ENCODE measurements at regions of chr3 and their contacts with region 1.

Region 1: GRCh38 chr3:23805633-23806533 is at the start of gene UBE2E1:
- DNase-seq: no peak
- ATAC-seq: peak; percentile 71
- H3K4me3 ChIP-seq: peak within 1 kb of the TSS; percentile 98
- H3K27ac ChIP-seq: peak within 1 kb of the TSS; percentile 82
- H3K4me1 ChIP-seq: peaks cover 8% of the 10 kb centered on the region
- H3K27me3 ChIP-seq: no peaks in the 10 kb centered on the region
- CTCF ChIP-seq: no peak
- EP300 ChIP-seq: 0 out of 4 replicates have a peak, but pooled peaks of 1 of the 2 experiments have one; percentile 57
- POLR2A ChIP-seq: peak; percentile 84
- RAD21 ChIP-seq: no peak
- polyA plus RNA-seq, gene UBE2E1: 113 to 128 TPM

Region 2: GRCh38 chr3:23202921-23203707 is 602.8 kb before region 1 on chr3 and contains the start of gene UBE2E2:
- CTCF ChIA-PET with region 1: no interaction called
- POLR2A ChIA-PET with region 1: no interaction called
- RAD21 ChIA-PET with region 1: interaction called, 3 read pairs
- SMC1A ChIA-PET with region 1: interaction called, 4 read pairs
- in situ Hi-C with region 1: no loop called
- intact Hi-C with region 1: loop called (anchors 5 kb)
- DNase-seq: no peak
- ATAC-seq: peak; percentile 77
- H3K4me3 ChIP-seq: peak within 1 kb of the TSS; percentile 92
- H3K27ac ChIP-seq: peak within 1 kb of the TSS; percentile 59
- H3K4me1 ChIP-seq: no peaks in the 10 kb centered on the region
- H3K27me3 ChIP-seq: no peaks in the 10 kb centered on the region
- CTCF ChIP-seq: no peak
- EP300 ChIP-seq: peak in 1 of 2 experiments; percentile 22; a peak in 1 of 4 replicates
- POLR2A ChIP-seq: peak; percentile 75
- RAD21 ChIP-seq: peak; percentile 22; the same call in 1 of the 2 replicates
- polyA plus RNA-seq, gene UBE2E2: 8.7 to 15.0 TPM

Region 3: DNA sequence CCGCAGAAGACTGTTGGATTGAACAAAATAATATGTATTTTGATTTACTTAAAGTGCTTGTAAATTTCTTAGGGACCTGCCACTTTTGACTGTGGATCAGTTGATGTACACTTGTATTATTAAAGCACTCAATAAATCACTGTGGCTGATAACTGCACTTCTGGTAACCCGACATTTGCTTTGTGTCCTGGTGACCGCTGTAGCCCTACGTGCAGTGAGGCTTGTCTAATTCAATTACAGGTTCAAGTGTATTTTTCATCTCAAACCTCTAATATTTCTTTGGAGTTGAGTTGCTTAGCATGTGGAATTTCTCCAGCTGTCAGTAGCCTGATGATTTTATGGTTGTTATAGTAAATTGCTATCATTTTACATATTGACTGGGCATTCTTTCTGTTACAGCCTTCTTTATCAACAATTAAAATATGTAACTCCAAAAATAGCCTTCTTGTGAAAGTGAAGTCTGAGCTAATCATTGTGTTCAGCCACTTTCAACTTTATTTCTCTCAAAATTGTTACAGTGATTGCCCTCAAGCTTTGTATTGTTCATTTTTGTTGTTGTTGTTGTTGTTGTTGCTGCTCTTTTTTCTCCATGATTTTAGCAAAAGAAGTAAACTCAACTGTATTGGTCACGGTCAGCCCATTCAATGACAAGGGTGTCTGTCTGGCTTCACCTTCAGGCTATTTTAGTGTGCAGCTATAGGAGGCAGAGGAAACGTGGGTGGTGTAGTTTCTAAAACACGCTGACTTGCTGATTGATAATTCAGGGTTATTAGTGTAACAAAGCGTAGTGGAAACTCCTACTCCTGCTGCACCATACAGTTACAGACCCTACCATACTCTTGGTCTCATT is 215.2 kb before region 1 on chr3:
- CTCF ChIA-PET with region 1: no interaction called
- POLR2A ChIA-PET with region 1: no interaction called
- RAD21 ChIA-PET with region 1: interaction called, 5 read pairs
- SMC1A ChIA-PET with region 1: interaction called, 6 read pairs
- in situ Hi-C with region 1: no loop called
- intact Hi-C with region 1: loop called (anchors 5 kb)
- DNase-seq: peak; percentile 78
- ATAC-seq: peak; percentile 80
- H3K4me3 ChIP-seq: no peak overlapping the region
- H3K27ac ChIP-seq: peak overlapping the region; percentile 17; the same call in 1 of the 2 replicates
- H3K4me1 ChIP-seq: peaks cover 37% of the 10 kb centered on the region
- H3K27me3 ChIP-seq: no peaks in the 10 kb centered on the region
- CTCF ChIP-seq: no peak
- EP300 ChIP-seq: peak in 1 of 2 experiments; percentile 83; a peak in 3 of 4 replicates
- POLR2A ChIP-seq: no peak
- RAD21 ChIP-seq: peak; percentile 27

Region 4: DNA sequence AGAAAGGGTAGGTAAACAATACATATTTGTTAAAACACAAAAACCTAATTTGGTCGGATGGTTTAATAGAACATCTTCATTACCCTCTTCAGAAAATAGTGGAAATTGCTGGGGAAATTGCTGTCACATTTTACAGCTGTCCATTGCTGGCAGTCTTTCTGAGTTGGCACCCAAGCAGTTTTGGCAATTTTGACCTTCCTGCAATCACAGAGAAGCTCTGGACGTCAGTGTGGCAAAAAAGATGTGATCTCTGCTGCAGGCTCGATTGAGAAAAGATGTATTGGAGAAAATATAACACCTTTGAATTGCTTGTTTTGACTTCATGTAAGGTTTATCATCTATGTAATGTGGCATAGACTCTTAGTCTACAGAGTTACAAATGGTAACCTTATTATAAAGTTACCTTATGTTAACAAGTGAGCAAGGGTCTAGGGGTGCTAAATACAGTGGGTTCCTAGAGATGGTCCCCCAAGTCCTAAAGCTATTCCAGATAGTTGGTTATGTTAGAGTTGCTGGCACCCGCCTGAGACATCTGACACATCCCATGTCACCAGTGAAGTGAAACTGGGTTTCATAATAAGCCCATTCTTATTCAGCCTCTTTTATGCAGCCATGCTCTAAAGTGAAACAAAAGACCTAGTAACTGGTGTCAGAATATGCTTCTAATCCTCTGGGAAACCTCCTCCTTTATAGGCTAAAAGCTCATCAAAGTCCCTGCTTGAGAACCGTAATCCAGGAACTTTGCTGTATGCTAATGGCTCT is 13.9 kb after region 1 on chr3:
- CTCF ChIA-PET with region 1: no interaction called
- POLR2A ChIA-PET with region 1: no interaction called
- RAD21 ChIA-PET with region 1: interaction called, 5 read pairs
- SMC1A ChIA-PET with region 1: interaction called, 14 read pairs
- in situ Hi-C with region 1: no loop called
- intact Hi-C with region 1: no loop called
- DNase-seq: no peak
- ATAC-seq: peak; percentile 79
- H3K4me3 ChIP-seq: no peak overlapping the region
- H3K27ac ChIP-seq: peak overlapping the region; percentile 20; the same call in 1 of the 2 replicates
- H3K4me1 ChIP-seq: peaks cover 27% of the 10 kb centered on the region
- H3K27me3 ChIP-seq: no peaks in the 10 kb centered on the region
- CTCF ChIP-seq: no peak
- EP300 ChIP-seq: no peak
- POLR2A ChIP-seq: no peak
- RAD21 ChIP-seq: no peak

Region 5: GRCh38 chr3:23834082-23834870 is 28.4 kb after region 1 on chr3:
- CTCF ChIA-PET with region 1: interaction called, 36 read pairs
- POLR2A ChIA-PET with region 1: interaction called, 92 read pairs
- RAD21 ChIA-PET with region 1: interaction called, 96 read pairs
- SMC1A ChIA-PET with region 1: interaction called, 224 read pairs
- in situ Hi-C with region 1: no loop called
- intact Hi-C with region 1: loop called (anchors 1 kb)
- DNase-seq: no peak
- ATAC-seq: no peak
- H3K4me3 ChIP-seq: no peak overlapping the region
- H3K27ac ChIP-seq: no peak overlapping the region
- H3K4me1 ChIP-seq: peaks cover 56% of the 10 kb centered on the region
- H3K27me3 ChIP-seq: no peaks in the 10 kb centered on the region
- CTCF ChIP-seq: peak in 2 of 3 experiments; percentile 36 to 53; a peak in 5 of 6 replicates
- EP300 ChIP-seq: no peak
- POLR2A ChIP-seq: no peak
- RAD21 ChIP-seq: peak; percentile 65

Region 6: GRCh38 chr3:23916886-23917678 is 111.2 kb after region 1 on chr3 and contains the starts of genes NKIRAS1 and RPL15:
- CTCF ChIA-PET with region 1: no interaction called
- POLR2A ChIA-PET with region 1: interaction called, 17 read pairs
- RAD21 ChIA-PET with region 1: interaction called, 3 read pairs
- SMC1A ChIA-PET with region 1: interaction called, 10 read pairs
- in situ Hi-C with region 1: no loop called
- intact Hi-C with region 1: no loop called
- DNase-seq: peak; percentile 89
- ATAC-seq: peak; percentile 90
- H3K4me3 ChIP-seq: peak within 1 kb of the TSS; percentile 100
- H3K27ac ChIP-seq: peak within 1 kb of the TSS; percentile 95
- H3K4me1 ChIP-seq: peaks cover 3% of the 10 kb centered on the region
- H3K27me3 ChIP-seq: no peaks in the 10 kb centered on the region
- CTCF ChIP-seq: peak in 2 of 3 experiments; percentile 15 to 38; a peak in 2 of 6 replicates
- EP300 ChIP-seq: peak; percentile 42 to 71; a peak in 2 of 4 replicates
- POLR2A ChIP-seq: peak; percentile 100
- RAD21 ChIP-seq: no peak
- polyA plus RNA-seq, gene NKIRAS1: 8.9 to 10.2 TPM
- polyA plus RNA-seq, gene RPL15: 6,967 to 10,761 TPM

Measured in GM12878 (cell line).